H1 (cell line): ENCODE measurements at regions of chr1 and their contacts with region 1.

Region 1: GRCh38 chr1:26358411-26359384 is 4.8 kb upstream of the CRYBG2 start:
- DNase-seq: no peak
- H3K4me3 ChIP-seq: peak overlapping the region in 2 of 4 experiments; percentile 67 to 92; a peak in 3 of 8 replicates
- H3K27ac ChIP-seq: no peak overlapping the region
- H3K4me1 ChIP-seq: peaks cover 6 to 24% (median 19%) of the 10 kb centered on the region in 4 experiments
- H3K27me3 ChIP-seq: peaks cover 0 to 10% (median 10%) of the 10 kb centered on the region in 4 experiments; a peak in 4 of 7 replicates
- CTCF ChIP-seq: no peak
- EP300 ChIP-seq: no peak
- POLR2A ChIP-seq: no peak
- RAD21 ChIP-seq: no peak

Region 2: DNA sequence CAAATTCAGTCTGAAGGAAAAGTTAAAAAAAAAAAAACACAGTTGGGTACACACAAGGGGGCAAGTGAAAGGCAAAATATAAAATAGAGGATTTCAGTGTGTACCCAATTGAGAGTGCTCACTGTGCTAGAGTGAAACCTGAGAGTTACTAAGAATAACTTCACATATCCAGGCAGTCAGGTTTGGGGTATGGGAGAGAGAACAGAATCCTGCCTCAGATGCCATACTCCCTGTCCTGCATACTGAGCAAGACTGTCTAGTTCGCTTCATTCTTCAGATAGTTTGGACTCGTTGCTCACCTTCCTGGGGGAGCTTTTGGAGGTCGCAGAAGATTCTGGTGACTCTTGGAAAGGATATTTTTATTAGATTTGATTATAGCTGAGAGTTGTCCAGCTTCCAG is 104.3 kb before region 1 on chr1:
- CTCF ChIA-PET with region 1: no interaction called
- POLR2A ChIA-PET with region 1: no interaction called
- DNase-seq: no peak
- H3K4me3 ChIP-seq: no peak overlapping the region
- H3K27ac ChIP-seq: no peak overlapping the region
- H3K4me1 ChIP-seq: no peaks in the 10 kb centered on the region
- H3K27me3 ChIP-seq: no peaks in the 10 kb centered on the region
- CTCF ChIP-seq: no peak
- EP300 ChIP-seq: no peak
- POLR2A ChIP-seq: no peak
- RAD21 ChIP-seq: no peak

Region 3: GRCh38 chr1:26336477-26337205 is 22.1 kb before region 1 on chr1:
- CTCF ChIA-PET with region 1: interaction called, 139 read pairs
- POLR2A ChIA-PET with region 1: interaction called, 22 read pairs
- DNase-seq: peak; percentile 67 to 97
- H3K4me3 ChIP-seq: peak overlapping the region; percentile 55 to 86 (median 68)
- H3K27ac ChIP-seq: 0 out of 2 replicates have a peak overlapping the region, but pooled peaks have one; percentile 39
- H3K4me1 ChIP-seq: peaks cover 3 to 12% (median 6%) of the 10 kb centered on the region in 4 experiments
- H3K27me3 ChIP-seq: peaks cover 0 to 11% (median 5%) of the 10 kb centered on the region in 4 experiments; a peak in 5 of 7 replicates
- CTCF ChIP-seq: no peak
- EP300 ChIP-seq: no peak
- POLR2A ChIP-seq: no peak
- RAD21 ChIP-seq: no peak